Activated B cell treated with CpG ODN at 0.5 μM for 24 hours (primary cell): ENCODE measurements at regions of chr1 and their contacts with region 1.

Region 1: DNA sequence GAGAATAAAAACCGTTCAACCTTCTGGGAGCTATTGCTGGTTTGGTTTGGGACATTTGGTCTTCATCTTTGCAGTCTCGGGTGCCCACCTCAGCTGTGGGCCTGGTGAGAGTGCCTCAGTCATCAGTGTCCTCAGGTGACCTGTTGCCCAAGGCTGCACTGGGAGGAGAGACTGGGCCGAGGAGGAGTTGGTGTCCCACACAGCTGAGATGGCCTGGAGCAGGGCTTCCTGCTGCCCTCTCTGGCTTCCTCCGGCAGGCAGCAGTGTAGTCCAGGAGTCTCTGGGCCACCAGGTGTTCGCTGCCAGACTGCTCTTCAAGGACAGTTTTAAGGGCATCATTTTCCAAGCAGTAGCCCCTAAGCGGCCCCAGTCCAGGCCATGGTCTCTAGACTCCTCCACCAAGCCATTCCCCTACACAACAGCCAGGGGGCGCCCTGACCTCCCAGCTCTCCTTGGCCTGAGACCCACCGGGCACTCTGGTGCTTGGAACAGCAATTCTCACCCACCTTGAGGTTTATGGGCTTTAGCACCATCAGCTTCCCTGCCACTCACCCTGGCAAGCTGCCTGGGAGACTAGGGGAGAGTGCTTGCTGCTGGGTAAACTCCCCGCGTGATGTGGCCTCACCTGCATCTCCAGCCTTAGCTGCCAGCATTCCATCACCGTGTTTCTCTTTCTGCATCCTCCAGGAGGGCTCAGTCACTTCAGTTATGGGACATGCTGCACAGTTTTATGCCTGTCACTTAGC is 9.1 kb upstream of the SYTL1 start:
- DNase-seq: peak; percentile 49
- ATAC-seq: peak; percentile 92
- H3K4me3 Mint-ChIP-seq: no peak overlapping the region
- H3K27ac Mint-ChIP-seq: no peak overlapping the region
- H3K4me1 Mint-ChIP-seq: peaks cover 34% of the 10 kb centered on the region
- H3K27me3 Mint-ChIP-seq: no peaks in the 10 kb centered on the region
- CTCF ChIP-seq: no peak

Region 2: DNA sequence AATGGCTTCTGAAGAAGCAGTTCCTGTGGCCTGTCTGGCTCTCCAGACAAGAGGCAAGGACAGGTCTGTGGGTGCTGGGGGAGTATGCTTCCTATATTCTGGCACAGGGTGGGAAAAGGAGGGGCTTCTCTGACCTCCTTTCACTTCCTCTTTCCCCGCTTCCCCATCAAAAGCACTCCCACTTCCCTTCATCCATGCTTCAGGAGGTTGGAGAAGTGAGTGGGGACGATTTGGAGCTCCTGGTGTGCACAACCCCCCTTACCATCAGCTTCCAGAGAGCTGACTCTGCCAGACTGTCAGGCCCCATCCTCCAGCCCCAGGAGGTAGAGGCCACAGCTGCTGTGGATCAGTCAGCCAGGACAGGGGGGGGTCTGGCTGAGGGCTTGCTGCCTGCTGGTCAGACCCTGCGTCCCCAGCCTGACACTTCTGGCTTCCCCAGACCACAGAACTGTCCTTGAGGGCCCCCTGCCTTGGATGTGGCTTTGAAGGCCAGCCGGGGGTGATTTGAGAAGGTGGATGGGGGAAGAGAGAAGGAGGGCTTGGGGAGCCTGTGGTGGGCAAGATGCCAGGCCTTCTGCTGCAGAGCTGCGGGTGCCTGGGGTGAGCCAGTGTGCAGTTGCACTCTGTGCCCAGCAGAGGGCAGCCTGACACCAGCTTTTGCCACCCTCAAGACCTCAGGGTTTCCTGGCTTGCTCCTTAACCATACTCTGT is 32.2 kb before region 1 on chr1:
- CTCF ChIA-PET with region 1: interaction called, 24 read pairs
- POLR2A ChIA-PET with region 1: no interaction called
- intact Hi-C with region 1: no loop called
- DNase-seq: peak; percentile 72
- ATAC-seq: peak; percentile 90
- H3K4me3 Mint-ChIP-seq: no peak overlapping the region
- H3K27ac Mint-ChIP-seq: no peak overlapping the region
- H3K4me1 Mint-ChIP-seq: peaks cover 3% of the 10 kb centered on the region
- H3K27me3 Mint-ChIP-seq: no peaks in the 10 kb centered on the region
- CTCF ChIP-seq: peak; percentile 99

Region 3: DNA sequence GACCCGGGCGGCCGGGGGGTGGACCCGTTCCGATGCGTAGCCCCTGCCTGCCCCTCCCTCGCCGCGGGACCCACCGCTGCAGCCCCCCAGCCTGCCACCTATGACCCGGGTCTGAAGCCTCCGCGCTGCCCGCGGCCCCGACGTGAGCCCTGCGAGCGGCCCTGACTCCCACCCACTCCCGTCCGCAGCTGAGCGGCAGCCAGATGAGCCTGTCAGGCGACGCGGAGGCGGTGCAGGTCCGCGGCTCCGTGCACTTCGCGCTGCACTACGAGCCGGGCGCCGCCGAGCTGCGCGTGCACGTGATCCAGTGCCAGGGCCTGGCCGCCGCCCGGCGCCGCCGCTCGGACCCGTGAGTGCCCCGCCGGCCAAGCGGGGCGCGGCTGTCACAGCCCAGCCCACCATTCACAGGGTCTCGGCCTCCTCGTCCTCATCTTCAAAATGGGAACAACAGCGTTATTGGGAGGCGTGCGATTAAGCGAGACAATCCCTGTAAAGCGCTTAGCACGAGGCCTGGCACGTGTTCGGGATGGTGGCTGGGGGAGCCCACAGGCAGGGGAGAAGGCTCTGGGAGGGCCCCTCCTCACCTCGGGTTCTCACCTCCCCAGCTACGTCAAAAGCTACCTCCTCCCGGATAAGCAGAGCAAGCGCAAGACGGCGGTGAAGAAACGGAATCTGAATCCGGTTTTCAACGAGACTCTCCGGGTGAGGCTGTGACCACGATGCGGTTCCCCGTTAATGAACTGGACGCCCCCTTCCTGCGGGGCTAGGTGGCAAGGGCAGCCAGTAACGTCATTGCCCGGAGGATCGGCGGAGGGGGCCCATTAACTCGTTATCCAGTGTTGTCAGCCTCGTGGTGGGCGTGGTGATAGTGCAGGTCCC is 17.3 kb after region 1 on chr1:
- CTCF ChIA-PET with region 1: interaction called, 20 read pairs
- POLR2A ChIA-PET with region 1: interaction called, 6 read pairs
- intact Hi-C with region 1: no loop called
- DNase-seq: no peak
- ATAC-seq: peak; percentile 76
- H3K4me3 Mint-ChIP-seq: peak overlapping the region; percentile 44
- H3K27ac Mint-ChIP-seq: no peak overlapping the region
- H3K4me1 Mint-ChIP-seq: peaks cover 15% of the 10 kb centered on the region
- H3K27me3 Mint-ChIP-seq: no peaks in the 10 kb centered on the region
- CTCF ChIP-seq: no peak